Activated naive CD4-positive, alpha-beta T cell treated with anti-CD3 and anti-CD28 coated beads for 36 hours (primary cell): ENCODE measurements at regions of chr7 and their contacts with region 1.

Region 1: GRCh38 chr7:50467817-50468610 is 17.9 kb upstream of the FIGNL1 start:
- DNase-seq: peak; percentile 90
- H3K4me3 Mint-ChIP-seq: no peak overlapping the region
- H3K27ac Mint-ChIP-seq: no peak overlapping the region
- H3K4me1 Mint-ChIP-seq: peaks cover 9% of the 10 kb centered on the region
- H3K27me3 Mint-ChIP-seq: no peaks in the 10 kb centered on the region

Region 2: DNA sequence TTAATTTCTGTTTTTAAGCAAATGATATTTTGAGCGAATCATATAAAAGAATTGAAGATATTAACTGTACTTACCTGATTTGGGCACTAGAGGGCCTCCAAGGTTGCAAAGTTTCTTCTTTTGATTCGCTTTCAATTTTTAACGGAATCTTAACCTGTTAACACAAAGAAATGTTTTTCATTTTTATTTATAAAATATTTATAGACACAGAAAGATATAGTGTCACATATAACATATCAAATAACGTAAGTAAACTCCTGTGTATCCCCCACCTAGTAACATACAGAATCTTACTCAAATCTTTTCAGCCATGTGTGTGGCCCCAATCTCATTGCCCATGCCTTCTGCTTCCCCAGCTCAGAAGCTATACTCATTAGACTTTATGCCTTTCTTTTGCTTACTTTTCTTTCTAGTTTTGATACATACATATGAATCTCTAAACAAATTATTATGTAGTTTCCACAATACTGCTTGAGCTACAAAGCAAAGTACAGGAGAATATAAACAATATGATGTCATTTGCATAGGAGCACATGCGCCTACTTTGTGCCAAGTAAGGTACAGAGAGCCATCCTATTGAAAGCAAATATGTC is 325.5 kb before region 1 on chr7:
- CTCF ChIA-PET with region 1: interaction called, 4 read pairs
- intact Hi-C with region 1: loop called (anchors 1 kb)
- DNase-seq: peak; percentile 64
- H3K4me3 Mint-ChIP-seq: peak overlapping the region; percentile 45
- H3K27ac Mint-ChIP-seq: peak overlapping the region; percentile 82
- H3K4me1 Mint-ChIP-seq: peaks cover 43% of the 10 kb centered on the region
- H3K27me3 Mint-ChIP-seq: no peaks in the 10 kb centered on the region

Region 3: DNA sequence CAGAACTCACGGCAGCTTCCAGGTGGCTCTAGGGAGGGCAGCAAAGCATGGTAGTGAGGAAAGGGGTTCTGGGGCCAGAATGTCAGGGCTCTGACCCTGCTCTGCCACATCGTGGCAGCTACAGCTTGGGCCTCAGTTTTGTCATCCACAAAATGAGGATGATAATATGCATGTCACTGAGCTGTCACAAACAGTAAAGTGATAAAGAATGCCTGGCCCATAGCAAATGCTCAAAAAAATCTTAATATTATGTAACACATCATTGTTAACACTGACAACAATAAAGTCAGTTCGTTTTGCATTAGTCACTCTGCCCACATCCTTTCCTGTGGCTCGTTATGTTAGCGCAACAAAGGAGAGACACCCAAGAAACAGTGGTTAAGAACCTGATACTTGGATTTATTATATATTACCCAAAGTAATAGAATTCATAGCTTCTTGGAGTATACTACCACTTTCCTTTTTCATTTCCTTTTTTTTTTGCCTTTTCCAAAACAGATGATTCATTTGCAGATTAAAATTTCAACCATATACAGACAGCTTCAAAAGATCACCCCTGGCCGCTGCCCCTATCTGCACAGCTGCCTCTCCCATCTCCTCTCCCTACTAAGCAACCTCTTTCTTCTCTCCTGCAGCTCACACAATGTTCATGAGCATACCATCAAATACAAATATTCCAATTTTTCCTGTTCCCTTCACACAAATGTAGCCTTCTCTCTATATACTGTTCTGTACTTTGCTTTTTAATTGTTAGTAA is 142.7 kb after region 1 on chr7:
- CTCF ChIA-PET with region 1: interaction called, 11 read pairs
- intact Hi-C with region 1: loop called (anchors 1 kb)
- DNase-seq: peak; percentile 80
- H3K4me3 Mint-ChIP-seq: no peak overlapping the region
- H3K27ac Mint-ChIP-seq: no peak overlapping the region
- H3K4me1 Mint-ChIP-seq: peaks cover 26% of the 10 kb centered on the region
- H3K27me3 Mint-ChIP-seq: no peaks in the 10 kb centered on the region

Region 4: DNA sequence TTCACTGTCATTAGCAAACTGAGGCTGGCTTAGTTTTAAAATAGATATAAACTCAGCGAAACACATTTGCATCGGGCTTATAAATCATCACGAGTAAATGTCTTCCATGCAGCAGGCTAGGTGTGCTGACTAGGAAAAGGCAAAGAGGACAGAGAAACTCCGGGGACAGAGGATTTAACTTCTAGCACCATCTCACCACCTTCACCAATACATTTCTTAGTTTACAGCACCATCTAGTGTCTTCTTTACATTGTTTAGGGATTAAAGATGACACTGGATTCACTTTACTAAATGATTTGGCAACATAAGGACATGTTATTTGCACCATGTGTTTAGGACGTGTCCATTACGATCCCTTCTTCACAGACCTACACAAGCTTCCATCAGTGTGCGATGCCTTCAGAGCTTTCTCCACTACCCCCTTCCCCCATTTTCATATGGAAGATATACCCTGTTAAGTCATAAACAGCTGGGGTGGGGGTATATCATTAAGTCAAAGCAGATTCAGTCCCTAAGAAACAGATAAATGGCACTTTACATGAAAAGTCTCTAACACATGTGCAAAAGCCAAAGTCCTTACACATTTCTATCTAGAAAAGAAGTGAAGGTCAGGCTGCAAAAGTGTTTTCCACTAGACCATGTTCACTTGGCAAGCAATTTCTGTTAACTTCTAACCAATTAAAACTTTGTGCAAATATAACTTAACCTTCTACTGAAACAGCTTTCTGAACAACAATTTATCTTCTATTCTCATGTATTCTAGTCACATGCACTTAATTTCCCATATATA is 211.4 kb after region 1 on chr7:
- CTCF ChIA-PET with region 1: interaction called, 43 read pairs
- intact Hi-C with region 1: loop called (anchors 1 kb)
- DNase-seq: no peak
- H3K4me3 Mint-ChIP-seq: no peak overlapping the region
- H3K27ac Mint-ChIP-seq: no peak overlapping the region
- H3K4me1 Mint-ChIP-seq: no peaks in the 10 kb centered on the region
- H3K27me3 Mint-ChIP-seq: no peaks in the 10 kb centered on the region

Region 5: DNA sequence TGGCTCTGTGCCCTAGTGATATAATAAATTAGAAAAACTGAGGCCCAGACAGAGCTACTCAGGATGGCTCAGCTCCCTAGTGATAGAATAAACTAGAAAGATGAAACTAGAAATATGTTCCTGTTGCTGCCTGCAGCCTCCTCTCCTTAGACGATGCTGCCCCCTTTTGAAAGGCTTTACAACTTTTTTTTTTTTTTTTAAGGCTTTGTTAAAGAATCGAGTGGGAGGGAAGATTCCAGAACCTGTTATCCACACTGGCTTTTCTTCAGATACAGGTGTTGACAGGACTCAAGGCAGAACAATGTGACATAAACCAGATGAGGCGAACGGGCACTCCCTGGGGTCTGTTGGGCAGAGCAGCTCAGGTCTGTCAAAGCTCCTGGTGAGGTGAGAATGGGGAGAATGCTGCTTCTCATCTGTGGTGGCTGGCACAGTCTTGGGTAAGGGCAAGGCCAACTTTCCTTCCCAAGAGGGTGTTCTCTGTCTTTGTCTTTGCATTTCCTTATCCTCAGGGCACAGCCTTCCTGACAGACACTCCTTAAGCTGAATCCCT is 673.5 kb after region 1 on chr7:
- CTCF ChIA-PET with region 1: interaction called, 12 read pairs
- intact Hi-C with region 1: loop called (anchors 1 kb)
- DNase-seq: peak; percentile 31
- H3K4me3 Mint-ChIP-seq: no peak overlapping the region
- H3K27ac Mint-ChIP-seq: no peak overlapping the region
- H3K4me1 Mint-ChIP-seq: peaks cover 14% of the 10 kb centered on the region
- H3K27me3 Mint-ChIP-seq: no peaks in the 10 kb centered on the region